Dendritic cell treated with granulocyte-macrophage colony-stimulating factor and Interleukin-4, amounts not matched to agents 40 ng/mL and 50 ng/mL, for 4 days (primary cell): ENCODE measurements at regions of chr12 and their contacts with region 1.

Region 1: GRCh38 chr12:3182426-3182825 is 105.2 kb downstream of the TSPAN9 start:
- H3K4me3 Mint-ChIP-seq: no peak overlapping the region
- H3K27ac Mint-ChIP-seq: no peak overlapping the region
- H3K4me1 Mint-ChIP-seq: no peaks in the 10 kb centered on the region
- H3K27me3 Mint-ChIP-seq: peaks cover 19% of the 10 kb centered on the region

Region 2: GRCh38 chr12:2794736-2795289 is 387.6 kb before region 1 on chr12 and contains the start of gene FKBP4:
- intact Hi-C with region 1: no loop called
- H3K4me3 Mint-ChIP-seq: peak within 1 kb of the TSS; percentile 100
- H3K27ac Mint-ChIP-seq: peak within 1 kb of the TSS; percentile 89
- H3K4me1 Mint-ChIP-seq: peaks cover 48% of the 10 kb centered on the region
- H3K27me3 Mint-ChIP-seq: peaks cover 13% of the 10 kb centered on the region

Region 3: GRCh38 chr12:3141339-3142321 is 40.8 kb before region 1 on chr12:
- intact Hi-C with region 1: loop called (anchors 2 kb)
- H3K4me3 Mint-ChIP-seq: no peak overlapping the region
- H3K27ac Mint-ChIP-seq: no peak overlapping the region
- H3K4me1 Mint-ChIP-seq: no peaks in the 10 kb centered on the region
- H3K27me3 Mint-ChIP-seq: peaks cover 65% of the 10 kb centered on the region